ENCODE measurements at regions of chr9 and their contacts with region 1.

Region 1: GRCh38 chr9:14768405-14769229 is 46.1 kb upstream of the CER1 start:
- DNase-seq: peak; percentile 42
- ATAC-seq: peak; percentile 72
- H3K4me3 ChIP-seq: no peak overlapping the region
- H3K27ac ChIP-seq: no peak overlapping the region
- H3K4me1 ChIP-seq: no peaks in the 10 kb centered on the region
- H3K27me3 ChIP-seq: peaks cover 39% of the 10 kb centered on the region; the same call in 1 of the 2 replicates
- CTCF ChIP-seq: peak; percentile 57 to 80 (median 58); a peak in 5 of 6 replicates
- POLR2A ChIP-seq: no peak
- RAD21 ChIP-seq: peak; percentile 72

Region 2: DNA sequence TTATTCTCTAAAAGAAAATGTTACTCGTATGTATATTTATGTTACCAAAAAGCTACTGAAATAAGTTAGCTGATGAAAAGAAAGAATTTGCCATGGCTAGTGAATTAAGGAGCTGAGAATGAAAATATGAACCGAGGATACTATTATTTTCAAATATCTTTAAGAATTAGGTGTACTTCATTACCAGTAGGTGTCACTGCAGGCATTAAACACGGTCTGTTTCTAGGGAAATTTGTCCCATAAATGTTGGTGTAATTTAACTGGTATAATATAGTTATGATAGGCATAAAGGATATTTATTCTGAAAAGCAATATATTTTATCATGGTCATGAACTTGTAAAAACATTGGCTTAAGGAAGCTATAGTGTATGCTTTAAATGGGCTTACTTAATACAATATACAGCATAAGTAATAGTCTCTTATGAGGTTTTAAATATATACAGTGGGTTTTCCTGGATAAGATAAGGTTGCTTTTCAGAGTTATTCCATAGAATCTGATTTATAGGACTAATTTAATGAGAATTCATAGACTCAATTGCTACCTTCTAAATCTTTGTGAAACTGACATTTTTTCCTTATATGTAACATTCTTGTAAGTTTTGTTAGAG is 1416.7 kb before region 1 on chr9:
- CTCF ChIA-PET with region 1: no interaction called
- POLR2A ChIA-PET with region 1: no interaction called
- RAD21 ChIA-PET with region 1: no interaction called
- intact Hi-C with region 1: loop called (anchors 5 kb)
- DNase-seq: peak; percentile 7
- ATAC-seq: peak; percentile 49; the same call in 1 of the 2 replicates
- H3K4me3 ChIP-seq: no peak overlapping the region
- H3K27ac ChIP-seq: no peak overlapping the region
- H3K4me1 ChIP-seq: no peaks in the 10 kb centered on the region
- H3K27me3 ChIP-seq: no peaks in the 10 kb centered on the region
- CTCF ChIP-seq: peak; percentile 15 to 54 (median 36); a peak in 4 of 6 replicates
- POLR2A ChIP-seq: no peak
- RAD21 ChIP-seq: peak; percentile 49

Region 3: GRCh38 chr9:14428781-14429230 is 339.8 kb before region 1 on chr9:
- CTCF ChIA-PET with region 1: interaction called, 13 read pairs
- POLR2A ChIA-PET with region 1: no interaction called
- RAD21 ChIA-PET with region 1: no interaction called
- intact Hi-C with region 1: no loop called
- DNase-seq: peak; percentile 57
- ATAC-seq: peak; percentile 90
- H3K4me3 ChIP-seq: no peak overlapping the region
- H3K27ac ChIP-seq: no peak overlapping the region
- H3K4me1 ChIP-seq: 0 out of 4 replicates have a peak, but pooled peaks cover 0 to 4% of the 10 kb centered on the region in 2 experiments
- H3K27me3 ChIP-seq: no peaks in the 10 kb centered on the region
- CTCF ChIP-seq: peak; percentile 50 to 84 (median 72); a peak in 5 of 6 replicates
- POLR2A ChIP-seq: no peak
- RAD21 ChIP-seq: peak; percentile 55

Region 4: DNA sequence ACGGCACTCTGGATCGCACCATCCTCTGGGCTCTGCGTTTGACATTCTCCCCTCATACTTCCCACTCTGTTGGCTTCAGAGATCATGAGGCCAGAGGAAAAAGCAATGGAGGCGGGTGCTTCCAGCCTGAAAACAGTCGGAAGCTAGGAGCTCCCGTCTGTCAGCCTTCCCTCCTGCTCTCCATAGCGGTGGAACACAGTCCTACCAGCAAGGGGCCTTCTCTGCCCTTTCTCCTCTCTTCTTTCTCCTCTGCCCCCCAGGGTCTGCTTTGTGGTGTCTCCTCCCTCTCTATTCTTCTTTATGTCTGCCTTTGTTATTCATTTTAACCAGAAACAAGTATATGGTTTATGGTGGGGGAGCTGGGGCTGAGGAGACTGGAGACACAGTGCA is 302.2 kb before region 1 on chr9:
- CTCF ChIA-PET with region 1: interaction called, 23 read pairs
- POLR2A ChIA-PET with region 1: no interaction called
- RAD21 ChIA-PET with region 1: interaction called, 3 read pairs
- intact Hi-C with region 1: loop called (anchors 1 kb)
- DNase-seq: no peak
- ATAC-seq: no peak
- H3K4me3 ChIP-seq: no peak overlapping the region
- H3K27ac ChIP-seq: no peak overlapping the region
- H3K4me1 ChIP-seq: no peaks in the 10 kb centered on the region
- H3K27me3 ChIP-seq: peaks cover 41% of the 10 kb centered on the region; the same call in 1 of the 2 replicates
- CTCF ChIP-seq: no peak
- POLR2A ChIP-seq: no peak
- RAD21 ChIP-seq: no peak